Activated T-helper 1 cell treated with anti-CD3 and anti-CD28 coated beads, Interleukin-12 subunit alpha, Interleukin-12 subunit beta, Interleukin-2, Interleukin-4 antibody, amounts not matched to agents 30 ng/mL and 10 ng/mL and 1 ng/mL, durations not matched to agents 14 hours and 24 hours and 36 hours (primary cell): ENCODE measurements at regions of chr7 and their contacts with region 1.

Region 1: GRCh38 chr7:122528879-122529481 is 169.9 kb downstream of the RNF133 start:
- DNase-seq: no peak
- H3K4me3 Mint-ChIP-seq: no peak overlapping the region
- H3K27ac Mint-ChIP-seq: no peak overlapping the region
- H3K4me1 Mint-ChIP-seq: no peaks in the 10 kb centered on the region
- H3K27me3 Mint-ChIP-seq: no peaks in the 10 kb centered on the region

Region 2: DNA sequence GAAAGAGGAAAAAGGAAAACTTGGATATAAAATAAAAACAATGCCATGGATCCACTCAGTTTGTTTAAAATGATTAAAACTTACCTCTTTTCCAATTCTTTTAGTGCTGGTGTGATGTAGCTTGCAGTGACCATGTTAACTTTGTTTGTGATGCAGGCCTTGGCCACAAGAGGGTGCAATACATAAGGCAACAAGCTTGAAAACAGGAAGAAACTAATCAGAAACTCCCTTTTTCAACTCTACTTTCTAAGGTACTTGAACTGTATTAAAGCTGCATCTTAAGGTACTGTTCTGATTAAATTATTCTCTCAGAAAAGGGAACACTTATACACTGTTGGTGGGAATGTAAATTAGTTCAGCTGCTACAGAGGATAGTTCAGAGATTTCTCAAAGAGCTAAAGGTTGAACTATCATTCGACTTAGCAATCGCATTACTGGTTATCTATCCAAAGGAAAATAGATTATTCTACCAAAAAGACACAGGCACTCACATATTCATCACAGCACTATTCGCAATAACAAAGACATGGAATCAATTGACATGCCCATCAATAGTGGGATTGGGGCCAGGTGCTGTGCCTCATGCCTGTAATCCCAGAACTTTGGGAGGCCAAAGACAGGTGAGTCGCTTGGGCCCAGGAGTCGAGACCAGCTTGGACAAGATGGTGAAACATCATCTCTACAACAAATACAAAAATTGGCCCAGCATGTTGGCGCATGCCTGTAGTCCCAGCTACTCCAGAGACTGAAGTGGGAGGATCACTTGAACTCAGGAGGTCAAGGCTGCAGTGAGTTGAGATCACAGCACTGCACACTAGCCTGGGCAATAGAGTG is 435.8 kb before region 1 on chr7:
- intact Hi-C with region 1: loop called (anchors 1 kb)
- DNase-seq: peak; percentile 25
- H3K4me3 Mint-ChIP-seq: no peak overlapping the region
- H3K27ac Mint-ChIP-seq: no peak overlapping the region
- H3K4me1 Mint-ChIP-seq: no peaks in the 10 kb centered on the region
- H3K27me3 Mint-ChIP-seq: no peaks in the 10 kb centered on the region

Region 3: DNA sequence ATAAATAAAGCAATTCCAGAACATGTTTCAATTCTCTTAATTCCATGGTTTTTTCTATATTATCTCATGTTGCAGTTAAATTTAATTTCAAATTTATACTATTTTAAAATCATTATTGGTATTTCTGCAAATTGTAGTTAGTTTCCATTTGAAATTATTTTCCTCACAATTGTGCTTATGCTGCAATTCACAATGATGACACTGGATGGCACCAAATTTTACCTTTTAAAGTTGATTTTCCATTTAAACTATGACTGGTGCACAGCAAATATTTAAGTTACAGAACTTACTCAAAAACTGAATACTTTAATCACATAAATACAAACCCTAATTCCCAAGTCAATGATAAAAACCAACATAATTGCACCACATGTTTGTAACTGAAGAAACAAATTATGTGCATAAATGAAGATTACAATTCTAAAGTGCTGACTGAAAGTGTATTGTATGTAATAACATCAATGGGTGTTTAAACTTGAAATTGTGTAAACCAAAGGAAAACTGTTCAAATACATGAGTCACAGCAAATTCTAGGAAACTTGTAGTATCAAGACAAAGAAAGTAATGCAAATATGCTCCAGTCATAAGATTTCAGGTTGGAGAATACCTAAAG is 309.6 kb before region 1 on chr7:
- intact Hi-C with region 1: loop called (anchors 1 kb)
- DNase-seq: no peak
- H3K4me3 Mint-ChIP-seq: no peak overlapping the region
- H3K27ac Mint-ChIP-seq: no peak overlapping the region
- H3K4me1 Mint-ChIP-seq: no peaks in the 10 kb centered on the region
- H3K27me3 Mint-ChIP-seq: no peaks in the 10 kb centered on the region

Region 4: DNA sequence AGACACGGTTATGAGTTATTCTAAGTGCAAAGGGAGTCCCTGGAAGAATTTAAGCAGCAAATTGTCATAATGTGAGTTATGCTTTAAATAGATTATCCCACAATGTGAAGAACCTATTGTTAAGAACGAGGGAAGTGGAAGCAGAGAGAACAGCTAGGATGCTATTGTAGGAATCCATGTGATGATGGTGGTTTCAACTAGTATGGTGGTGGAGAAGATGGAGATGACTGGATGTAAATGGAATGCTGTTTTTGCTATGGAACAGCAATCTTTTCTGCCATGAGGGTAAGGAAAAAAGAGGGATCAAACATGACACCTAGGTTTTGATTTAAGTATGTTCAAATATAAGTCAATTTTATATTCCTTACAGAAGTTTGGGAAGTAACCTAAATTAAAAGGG is 21.4 kb before region 1 on chr7:
- intact Hi-C with region 1: no loop called
- DNase-seq: no peak
- H3K4me3 Mint-ChIP-seq: no peak overlapping the region
- H3K27ac Mint-ChIP-seq: no peak overlapping the region
- H3K4me1 Mint-ChIP-seq: no peaks in the 10 kb centered on the region
- H3K27me3 Mint-ChIP-seq: no peaks in the 10 kb centered on the region

Region 5: DNA sequence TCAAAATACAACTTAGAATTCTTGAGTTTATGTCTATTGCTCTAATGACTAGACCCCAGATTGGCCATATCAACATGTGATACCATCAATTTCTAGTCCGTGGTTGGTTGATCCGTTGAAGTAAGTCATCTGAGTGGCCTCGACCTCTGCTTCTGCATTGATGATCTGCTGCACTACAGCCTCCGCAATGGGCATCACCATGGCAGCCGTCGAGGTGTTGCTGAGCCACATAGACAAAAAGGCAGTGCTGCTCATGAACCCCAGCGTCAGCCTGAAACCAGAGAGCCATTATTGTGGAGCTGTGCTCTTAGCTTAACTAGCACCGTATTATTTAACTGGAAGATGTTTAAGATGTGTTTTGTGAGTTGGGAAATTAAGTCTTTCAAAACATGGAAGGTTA is 640.1 kb after region 1 on chr7:
- intact Hi-C with region 1: no loop called
- DNase-seq: no peak
- H3K4me3 Mint-ChIP-seq: no peak overlapping the region
- H3K27ac Mint-ChIP-seq: no peak overlapping the region
- H3K4me1 Mint-ChIP-seq: no peaks in the 10 kb centered on the region
- H3K27me3 Mint-ChIP-seq: no peaks in the 10 kb centered on the region